Caki2 (cell line): ENCODE measurements at regions of chr3 and their contacts with region 1.

Region 1: DNA sequence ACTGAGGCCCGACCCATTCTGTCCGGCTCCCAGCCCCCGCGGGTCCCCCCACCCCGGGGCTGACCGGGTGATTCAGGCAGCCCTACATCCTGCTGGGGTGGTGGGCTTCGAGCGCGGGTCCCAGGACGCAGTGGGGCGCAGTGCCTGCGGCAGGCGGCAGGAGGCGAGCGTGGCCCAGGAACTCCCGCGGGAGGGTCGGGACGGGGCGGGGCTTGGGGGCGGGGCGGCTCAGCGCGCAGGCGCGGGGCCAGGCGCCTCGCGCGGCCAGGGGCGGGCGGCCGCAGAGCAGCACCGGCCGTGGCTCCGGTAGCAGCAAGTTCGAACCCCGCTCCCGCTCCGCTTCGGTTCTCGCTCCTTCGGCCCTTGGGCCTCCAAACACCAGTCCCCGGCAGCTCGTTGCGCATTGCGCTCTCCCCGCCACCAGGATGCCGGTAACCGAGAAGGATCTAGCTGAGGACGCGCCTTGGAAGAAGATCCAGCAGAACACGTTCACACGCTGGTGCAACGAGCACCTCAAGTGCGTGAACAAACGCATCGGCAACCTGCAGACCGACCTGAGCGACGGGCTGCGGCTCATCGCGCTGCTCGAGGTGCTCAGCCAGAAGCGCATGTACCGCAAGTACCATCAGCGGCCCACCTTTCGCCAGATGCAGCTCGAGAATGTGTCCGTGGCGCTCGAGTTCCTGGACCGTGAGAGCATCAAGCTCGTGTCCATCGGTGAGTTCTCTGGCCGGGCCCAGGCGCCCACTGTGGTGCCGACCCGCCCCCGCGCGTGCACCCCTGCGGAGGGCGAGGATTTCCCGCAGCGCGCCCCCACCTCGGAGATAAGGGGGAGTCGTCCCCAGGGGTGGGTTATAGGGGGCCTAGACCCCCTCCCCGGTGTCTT is at the start of gene FLNB:
- DNase-seq: peak; percentile 59
- total RNA-seq, gene FLNB: 173 and 197 TPM in 2 replicates

Region 2: GRCh38 chr3:58167431-58168351 is 159.3 kb after region 1 on chr3:
- in situ Hi-C with region 1: loop called (anchors 25 kb)
- DNase-seq: no peak